ENCODE measurements at regions of chr22 and their contacts with region 1.

Region 1: GRCh38 chr22:22030493-22031182 is 48.1 kb upstream of the TOP3B start:
- DNase-seq: peak; percentile 96
- H3K4me3 ChIP-seq: peak overlapping the region; percentile 68
- H3K27ac ChIP-seq: peak overlapping the region; percentile 94
- H3K4me1 ChIP-seq: peaks cover 99% of the 10 kb centered on the region
- CTCF ChIP-seq: peak; percentile 82

Region 2: GRCh38 chr22:21982338-21982965 is 48.2 kb before region 1 on chr22 and contains the start of gene TOP3B:
- CTCF ChIA-PET with region 1: no interaction called
- POLR2A ChIA-PET with region 1: interaction called, 3 read pairs
- intact Hi-C with region 1: loop called (anchors 2 kb)
- DNase-seq: peak; percentile 90
- H3K4me3 ChIP-seq: peak within 1 kb of the TSS; percentile 75
- H3K27ac ChIP-seq: peak within 1 kb of the TSS; percentile 8
- H3K4me1 ChIP-seq: peaks cover 14% of the 10 kb centered on the region
- CTCF ChIP-seq: no peak
- total RNA-seq, gene TOP3B: 65.6 and 82.6 TPM in 2 replicates

Region 3: DNA sequence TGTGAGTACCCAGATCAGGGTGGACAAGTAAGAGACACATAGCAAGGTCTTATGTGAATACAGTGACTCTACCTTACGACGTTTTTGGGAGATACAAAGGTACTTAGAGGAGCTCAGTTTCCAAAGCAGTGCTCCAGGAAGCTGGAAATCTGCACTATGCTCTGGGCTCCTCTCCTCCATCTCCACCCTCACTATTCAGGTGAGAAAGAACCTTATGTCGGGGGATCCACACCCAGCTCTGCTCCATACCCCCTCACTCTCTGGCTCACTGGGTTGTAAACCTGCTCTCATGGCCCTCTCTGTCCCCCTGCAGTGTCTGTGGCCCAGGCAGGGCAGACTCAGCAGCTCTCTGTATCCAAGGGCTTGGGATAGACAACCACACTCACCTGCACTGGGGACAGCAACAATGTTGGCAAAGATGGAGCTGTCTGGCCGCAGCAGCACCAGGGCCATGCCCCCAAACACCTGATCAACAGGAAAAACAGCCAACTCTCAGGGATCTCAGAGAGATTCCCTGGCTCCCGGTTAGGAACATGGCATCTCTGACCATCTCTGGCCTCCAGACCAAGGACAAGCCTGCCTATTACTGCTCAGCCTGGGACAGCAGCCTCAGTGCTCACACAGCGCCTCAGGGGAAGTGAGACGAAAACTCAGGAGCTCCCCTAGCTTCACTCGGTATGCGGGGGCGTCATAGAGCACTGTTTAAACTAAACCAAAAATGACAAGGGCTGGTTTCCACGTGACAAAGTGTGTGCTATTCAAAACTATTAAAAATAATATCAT is 12.8 kb after region 1 on chr22:
- CTCF ChIA-PET with region 1: interaction called, 41 read pairs
- POLR2A ChIA-PET with region 1: interaction called, 262 read pairs
- intact Hi-C with region 1: loop called (anchors 1 kb)
- DNase-seq: peak; percentile 81
- H3K4me3 ChIP-seq: peak overlapping the region; percentile 70
- H3K27ac ChIP-seq: peak overlapping the region; percentile 84
- H3K4me1 ChIP-seq: peaks cover 96% of the 10 kb centered on the region
- CTCF ChIP-seq: peak; percentile 70

Region 4: GRCh38 chr22:22110548-22111266 is 80.1 kb after region 1 on chr22:
- CTCF ChIA-PET with region 1: interaction called, 5 read pairs
- POLR2A ChIA-PET with region 1: interaction called, 8 read pairs
- intact Hi-C with region 1: loop called (anchors 5 kb)
- DNase-seq: peak; percentile 95
- H3K4me3 ChIP-seq: peak overlapping the region; percentile 38
- H3K27ac ChIP-seq: peak overlapping the region; percentile 64
- H3K4me1 ChIP-seq: peaks cover 34% of the 10 kb centered on the region
- CTCF ChIP-seq: peak; percentile 89

Region 5: GRCh38 chr22:22161924-22162851 is 131.6 kb after region 1 on chr22:
- CTCF ChIA-PET with region 1: no interaction called
- POLR2A ChIA-PET with region 1: interaction called, 21 read pairs
- intact Hi-C with region 1: loop called (anchors 2 kb)
- DNase-seq: peak; percentile 95
- H3K4me3 ChIP-seq: peak overlapping the region; percentile 66
- H3K27ac ChIP-seq: peak overlapping the region; percentile 99
- H3K4me1 ChIP-seq: peaks cover 84% of the 10 kb centered on the region
- CTCF ChIP-seq: no peak

Region 6: GRCh38 chr22:22342697-22343580 is 312.3 kb after region 1 on chr22:
- CTCF ChIA-PET with region 1: no interaction called
- POLR2A ChIA-PET with region 1: no interaction called
- intact Hi-C with region 1: no loop called
- DNase-seq: peak; percentile 83
- H3K4me3 ChIP-seq: no peak overlapping the region
- H3K27ac ChIP-seq: peak overlapping the region; percentile 26
- H3K4me1 ChIP-seq: peaks cover 25% of the 10 kb centered on the region
- CTCF ChIP-seq: peak; percentile 94

Measured in OCI-LY7 (cell line).